ENCODE measurements at regions of chrX and their contacts with region 1.

Region 1: GRCh38 chrX:140057001-140057411 is 91.7 kb upstream of the CXorf66 start:
- DNase-seq: peak; percentile 65 to 66
- H3K4me3 ChIP-seq: no peak overlapping the region
- H3K4me3 Mint-ChIP-seq: peak overlapping the region; percentile 12
- H3K27ac Mint-ChIP-seq: no peak overlapping the region
- H3K4me1 ChIP-seq: no peaks in the 10 kb centered on the region
- H3K4me1 Mint-ChIP-seq: no peaks in the 10 kb centered on the region
- H3K27me3 ChIP-seq: no peaks in the 10 kb centered on the region
- H3K27me3 Mint-ChIP-seq: peaks cover 3% of the 10 kb centered on the region
- CTCF ChIP-seq: peak; percentile 65 to 80

Region 2: GRCh38 chrX:140141444-140142029 is 84.5 kb after region 1 on chrX:
- CTCF ChIA-PET with region 1: interaction called, 3 read pairs
- POLR2A ChIA-PET with region 1: no interaction called
- intact Hi-C with region 1: loop called (anchors 1 kb)
- DNase-seq: peak in 1 of 2 experiments; percentile 18
- H3K4me3 ChIP-seq: no peak overlapping the region
- H3K4me3 Mint-ChIP-seq: no peak overlapping the region
- H3K27ac Mint-ChIP-seq: no peak overlapping the region
- H3K4me1 ChIP-seq: no peaks in the 10 kb centered on the region
- H3K4me1 Mint-ChIP-seq: no peaks in the 10 kb centered on the region
- H3K27me3 ChIP-seq: no peaks in the 10 kb centered on the region
- H3K27me3 Mint-ChIP-seq: no peaks in the 10 kb centered on the region
- CTCF ChIP-seq: peak; percentile 32 to 36

Region 3: DNA sequence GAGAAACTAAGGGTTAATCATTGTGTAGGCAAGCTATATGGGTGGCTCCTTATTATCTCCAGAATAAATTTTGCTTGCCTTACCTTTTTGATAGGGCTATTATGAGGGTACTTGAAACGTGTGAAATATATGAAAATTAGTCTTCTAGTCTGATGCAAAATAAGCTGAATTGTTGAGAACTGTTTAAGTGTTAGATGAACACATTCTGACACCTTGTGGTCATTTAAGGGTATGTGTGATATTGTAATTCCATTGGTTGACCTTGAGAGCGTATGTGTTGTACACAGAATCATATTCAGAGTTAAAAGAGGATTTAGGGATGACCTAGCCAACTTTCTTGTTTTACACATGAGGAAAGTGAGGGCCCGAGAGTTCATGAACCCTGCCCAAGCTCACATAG is 607.9 kb after region 1 on chrX:
- CTCF ChIA-PET with region 1: no interaction called
- POLR2A ChIA-PET with region 1: no interaction called
- intact Hi-C with region 1: loop called (anchors 1 kb)
- DNase-seq: peak in 1 of 2 experiments; percentile 1
- H3K4me3 ChIP-seq: no peak overlapping the region
- H3K4me3 Mint-ChIP-seq: no peak overlapping the region
- H3K27ac Mint-ChIP-seq: no peak overlapping the region
- H3K4me1 ChIP-seq: no peaks in the 10 kb centered on the region
- H3K4me1 Mint-ChIP-seq: no peaks in the 10 kb centered on the region
- H3K27me3 ChIP-seq: no peaks in the 10 kb centered on the region
- H3K27me3 Mint-ChIP-seq: peaks cover 9% of the 10 kb centered on the region
- CTCF ChIP-seq: no peak

Region 4: GRCh38 chrX:140733769-140734342 is 676.9 kb after region 1 on chrX:
- CTCF ChIA-PET with region 1: no interaction called
- POLR2A ChIA-PET with region 1: no interaction called
- intact Hi-C with region 1: loop called (anchors 5 kb)
- DNase-seq: peak in 1 of 2 experiments; percentile 17
- H3K4me3 ChIP-seq: no peak overlapping the region
- H3K4me3 Mint-ChIP-seq: no peak overlapping the region
- H3K27ac Mint-ChIP-seq: no peak overlapping the region
- H3K4me1 ChIP-seq: no peaks in the 10 kb centered on the region
- H3K4me1 Mint-ChIP-seq: no peaks in the 10 kb centered on the region
- H3K27me3 ChIP-seq: no peaks in the 10 kb centered on the region
- H3K27me3 Mint-ChIP-seq: peaks cover 3% of the 10 kb centered on the region
- CTCF ChIP-seq: peak; percentile 33 to 65